Caco-2 (cell line): ENCODE measurements at regions of chr7 and their contacts with region 1.

Region 1: GRCh38 chr7:112665726-112666125 is 124.5 kb downstream of the TMEM168 start:
- DNase-seq: peak; percentile 46 to 48
- H3K4me3 ChIP-seq: no peak overlapping the region
- H3K4me3 Mint-ChIP-seq: no peak overlapping the region
- H3K27ac Mint-ChIP-seq: no peak overlapping the region
- H3K4me1 ChIP-seq: no peaks in the 10 kb centered on the region; the same call in 1 of the 2 replicates
- H3K4me1 Mint-ChIP-seq: no peaks in the 10 kb centered on the region
- H3K27me3 ChIP-seq: no peaks in the 10 kb centered on the region
- H3K27me3 Mint-ChIP-seq: no peaks in the 10 kb centered on the region
- CTCF ChIP-seq: peak in 1 of 2 experiments; percentile 53

Region 2: DNA sequence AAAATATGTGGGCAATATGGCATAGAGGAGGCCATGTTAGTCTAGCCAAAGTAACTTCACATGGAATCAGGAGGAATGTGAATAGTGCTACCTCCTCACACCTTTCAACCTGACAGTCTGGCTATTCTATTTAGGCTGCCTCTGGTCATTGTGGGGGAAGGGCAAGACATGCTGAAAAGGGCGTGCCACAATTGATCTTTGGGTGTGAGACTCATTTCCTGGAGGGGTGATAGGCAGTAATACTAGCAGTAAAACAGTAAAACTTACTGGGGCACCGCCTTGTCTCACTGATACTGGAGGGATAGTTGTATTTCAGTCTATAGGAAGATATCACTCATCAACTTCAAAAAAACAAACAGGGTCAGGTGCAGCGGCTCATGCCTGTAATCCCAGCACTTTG is 35.7 kb after region 1 on chr7:
- CTCF ChIA-PET with region 1: no interaction called
- POLR2A ChIA-PET with region 1: no interaction called
- intact Hi-C with region 1: loop called (anchors 2 kb)
- DNase-seq: peak; percentile 32 to 64
- H3K4me3 ChIP-seq: no peak overlapping the region
- H3K4me3 Mint-ChIP-seq: no peak overlapping the region
- H3K27ac Mint-ChIP-seq: peak overlapping the region; percentile 82
- H3K4me1 ChIP-seq: peaks cover 43% of the 10 kb centered on the region
- H3K4me1 Mint-ChIP-seq: peaks cover 37% of the 10 kb centered on the region
- H3K27me3 ChIP-seq: no peaks in the 10 kb centered on the region
- H3K27me3 Mint-ChIP-seq: no peaks in the 10 kb centered on the region
- CTCF ChIP-seq: no peak

Region 3: DNA sequence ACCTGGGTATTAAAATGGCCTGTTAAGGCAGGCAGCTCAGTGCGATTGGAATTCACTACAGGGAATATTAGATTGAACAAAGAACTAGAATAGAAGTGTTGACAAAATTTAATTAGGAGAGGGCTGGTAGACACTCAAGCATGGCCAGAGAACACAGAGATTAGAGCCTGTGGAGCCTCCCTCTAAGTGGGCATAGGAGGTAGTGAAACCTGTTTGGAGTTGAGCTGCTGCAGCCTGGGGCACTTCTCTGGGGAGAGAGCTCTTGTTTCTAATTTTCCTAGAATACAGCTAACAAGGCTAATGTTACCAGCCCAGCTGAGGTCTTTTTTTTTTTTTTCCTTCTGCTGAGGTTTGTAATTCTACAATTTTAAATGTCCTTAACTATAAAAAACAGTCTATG is 78.1 kb after region 1 on chr7:
- CTCF ChIA-PET with region 1: no interaction called
- POLR2A ChIA-PET with region 1: no interaction called
- intact Hi-C with region 1: no loop called
- DNase-seq: no peak
- H3K4me3 ChIP-seq: no peak overlapping the region
- H3K4me3 Mint-ChIP-seq: no peak overlapping the region
- H3K27ac Mint-ChIP-seq: no peak overlapping the region
- H3K4me1 ChIP-seq: no peaks in the 10 kb centered on the region
- H3K4me1 Mint-ChIP-seq: no peaks in the 10 kb centered on the region
- H3K27me3 ChIP-seq: no peaks in the 10 kb centered on the region
- H3K27me3 Mint-ChIP-seq: no peaks in the 10 kb centered on the region
- CTCF ChIP-seq: no peak